Naive thymus-derived CD4-positive, alpha-beta T cell (primary cell): ENCODE measurements at regions of chr18 and their contacts with region 1.

Region 1: GRCh38 chr18:14086458-14087231 is 45.6 kb downstream of the ZNF519 start:
- DNase-seq: no peak
- ATAC-seq: no peak
- H3K4me3 ChIP-seq: no peak overlapping the region
- H3K4me3 Mint-ChIP-seq: no peak overlapping the region
- H3K27ac ChIP-seq: no peak overlapping the region
- H3K27ac Mint-ChIP-seq: no peak overlapping the region
- H3K4me1 ChIP-seq: no peaks in the 10 kb centered on the region
- H3K4me1 Mint-ChIP-seq: no peaks in the 10 kb centered on the region
- H3K27me3 ChIP-seq: no peaks in the 10 kb centered on the region
- H3K27me3 Mint-ChIP-seq: peaks cover 0 to 6% (median 0%) of the 10 kb centered on the region in 5 donors

Region 2: DNA sequence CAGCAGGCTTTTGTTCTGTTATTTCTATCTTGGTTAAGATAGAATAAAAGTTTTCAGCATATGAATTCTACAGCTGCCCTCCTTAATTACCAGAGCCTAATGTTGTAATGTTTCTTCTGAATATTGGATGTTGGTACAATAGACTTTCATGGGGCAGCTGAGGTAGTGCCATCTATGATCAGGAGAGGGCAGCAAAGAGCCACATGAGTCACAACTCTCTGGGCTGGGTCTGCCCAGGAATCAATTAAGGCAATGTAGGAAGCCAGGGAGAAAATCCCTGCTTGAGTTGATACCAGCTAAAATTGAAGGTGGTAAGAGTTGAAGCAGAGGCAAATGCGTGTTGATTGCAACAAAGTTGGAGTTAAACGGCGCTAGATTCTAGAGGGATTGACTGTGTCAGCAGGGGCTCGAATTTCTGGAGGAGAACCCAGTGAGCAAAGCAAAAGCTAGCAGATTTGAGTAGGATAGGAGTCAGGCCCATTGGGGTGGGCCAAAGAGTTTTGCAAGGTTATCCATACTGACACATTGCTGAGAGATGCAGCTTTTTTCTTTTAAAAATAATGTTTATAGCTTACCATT is 273.3 kb before region 1 on chr18:
- CTCF ChIA-PET with region 1: no interaction called
- POLR2A ChIA-PET with region 1: no interaction called
- intact Hi-C with region 1: loop called in 1 of 2 experiments (anchors 2 kb)
- DNase-seq: peak in 8 of 9 donors; percentile 14 to 51 (median 30)
- ATAC-seq: peak; percentile 82
- H3K4me3 ChIP-seq: no peak overlapping the region
- H3K4me3 Mint-ChIP-seq: no peak overlapping the region
- H3K27ac ChIP-seq: no peak overlapping the region
- H3K27ac Mint-ChIP-seq: peak overlapping the region in 1 of 9 donors; percentile 80
- H3K4me1 ChIP-seq: no peaks in the 10 kb centered on the region
- H3K4me1 Mint-ChIP-seq: peaks cover 0 to 4% (median 0%) of the 10 kb centered on the region in 7 donors
- H3K27me3 ChIP-seq: no peaks in the 10 kb centered on the region
- H3K27me3 Mint-ChIP-seq: peaks cover 0 to 13% (median 4%) of the 10 kb centered on the region in 5 donors

Region 3: DNA sequence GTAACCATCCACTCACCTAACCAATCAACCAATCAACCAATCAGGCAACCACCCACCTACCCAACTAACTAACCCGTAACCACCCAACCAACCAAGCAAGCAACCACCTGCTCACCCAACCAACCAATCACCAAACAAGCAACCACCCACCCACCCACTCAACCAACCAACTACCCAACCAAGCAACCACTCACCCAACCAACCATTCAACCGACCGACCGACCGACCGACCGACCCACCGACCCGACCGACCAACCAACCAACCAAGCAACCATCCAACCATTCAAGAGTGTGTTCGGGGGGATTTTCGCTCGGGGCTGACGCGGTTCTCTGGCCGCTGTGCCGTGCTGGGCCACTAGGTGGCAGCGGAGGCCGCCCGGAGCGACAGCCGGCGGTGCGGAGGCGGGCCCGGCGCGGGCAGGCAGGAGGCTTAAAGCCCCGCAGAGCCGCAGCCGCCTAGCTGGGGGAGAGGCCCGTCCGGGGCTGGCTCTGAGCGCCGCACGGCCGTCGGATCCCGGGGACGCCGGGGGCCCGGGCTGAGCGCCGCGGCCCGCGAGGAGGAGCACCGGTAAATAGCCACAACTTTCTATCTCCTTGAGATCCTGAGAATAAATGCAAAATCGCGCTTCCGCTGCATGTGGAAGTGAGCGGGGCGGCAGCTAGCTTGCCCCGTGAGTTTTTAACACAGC is 262.8 kb before region 1 on chr18 and contains the start of gene MC5R:
- CTCF ChIA-PET with region 1: no interaction called
- POLR2A ChIA-PET with region 1: no interaction called
- intact Hi-C with region 1: loop called in 1 of 2 experiments (anchors 2 kb)
- DNase-seq: peak; percentile 36 to 84 (median 68)
- ATAC-seq: peak; percentile 95
- H3K4me3 ChIP-seq: peak within 1 kb of the TSS; percentile 32
- H3K4me3 Mint-ChIP-seq: peak within 1 kb of the TSS in 9 of 10 donors; percentile 54 to 74 (median 62)
- H3K27ac ChIP-seq: no peak within 1 kb of the TSS
- H3K27ac Mint-ChIP-seq: no peak within 1 kb of the TSS
- H3K4me1 ChIP-seq: no peaks in the 10 kb centered on the region
- H3K4me1 Mint-ChIP-seq: peaks cover 0 to 12% (median 4%) of the 10 kb centered on the region in 7 donors
- H3K27me3 ChIP-seq: no peaks in the 10 kb centered on the region
- H3K27me3 Mint-ChIP-seq: peaks cover 16 to 42% (median 30%) of the 10 kb centered on the region in 5 donors
- total RNA-seq, gene MC5R: not detected